ENCODE measurements at regions of chr5 and their contacts with region 1.

Region 1: GRCh38 chr5:67003935-67004729 is 192.5 kb downstream of the CD180 start:
- DNase-seq: peak; percentile 81
- H3K4me3 Mint-ChIP-seq: peak overlapping the region; percentile 90
- H3K27ac Mint-ChIP-seq: peak overlapping the region; percentile 92
- H3K4me1 Mint-ChIP-seq: peaks cover 64% of the 10 kb centered on the region
- H3K27me3 Mint-ChIP-seq: no peaks in the 10 kb centered on the region

Region 2: DNA sequence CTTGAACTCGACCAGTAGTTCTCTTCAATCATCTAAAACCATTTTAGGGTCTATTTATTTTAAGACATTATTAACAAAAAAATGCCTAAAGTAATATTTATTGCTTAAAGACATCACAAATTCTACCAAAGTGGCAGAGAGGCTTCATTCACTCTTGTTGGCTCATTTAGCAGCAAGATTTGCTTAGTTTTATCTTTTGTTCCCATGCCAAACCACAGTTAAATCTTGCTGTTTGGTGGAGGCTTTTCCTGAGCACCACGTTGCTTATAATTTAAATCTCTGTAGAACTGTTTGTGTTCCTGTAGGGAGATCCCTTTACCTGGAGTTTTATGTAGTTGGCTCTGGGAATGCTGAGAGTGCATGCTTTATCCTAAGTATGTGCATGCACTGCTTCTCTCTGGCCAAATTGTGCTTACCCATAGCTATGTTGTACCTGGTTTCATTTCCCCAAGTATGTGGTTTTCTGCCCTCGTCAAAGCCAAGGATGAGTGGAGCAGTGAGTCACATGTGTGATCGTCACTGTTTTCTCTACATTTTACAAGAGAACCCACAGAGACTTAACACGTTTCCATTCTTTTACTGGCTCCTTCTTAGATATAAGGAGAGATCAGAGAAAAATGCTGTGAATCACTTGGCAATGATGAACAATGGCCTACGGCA is 450.1 kb before region 1 on chr5:
- intact Hi-C with region 1: loop called (anchors 10 kb)
- DNase-seq: peak; percentile 50
- H3K4me3 Mint-ChIP-seq: no peak overlapping the region
- H3K27ac Mint-ChIP-seq: peak overlapping the region; percentile 26
- H3K4me1 Mint-ChIP-seq: peaks cover 32% of the 10 kb centered on the region
- H3K27me3 Mint-ChIP-seq: no peaks in the 10 kb centered on the region

Region 3: GRCh38 chr5:66840511-66841013 is 163.6 kb before region 1 on chr5:
- intact Hi-C with region 1: loop called (anchors 1 kb)
- DNase-seq: peak; percentile 53
- H3K4me3 Mint-ChIP-seq: peak overlapping the region; percentile 38
- H3K27ac Mint-ChIP-seq: peak overlapping the region; percentile 81
- H3K4me1 Mint-ChIP-seq: peaks cover 81% of the 10 kb centered on the region
- H3K27me3 Mint-ChIP-seq: no peaks in the 10 kb centered on the region

Region 4: DNA sequence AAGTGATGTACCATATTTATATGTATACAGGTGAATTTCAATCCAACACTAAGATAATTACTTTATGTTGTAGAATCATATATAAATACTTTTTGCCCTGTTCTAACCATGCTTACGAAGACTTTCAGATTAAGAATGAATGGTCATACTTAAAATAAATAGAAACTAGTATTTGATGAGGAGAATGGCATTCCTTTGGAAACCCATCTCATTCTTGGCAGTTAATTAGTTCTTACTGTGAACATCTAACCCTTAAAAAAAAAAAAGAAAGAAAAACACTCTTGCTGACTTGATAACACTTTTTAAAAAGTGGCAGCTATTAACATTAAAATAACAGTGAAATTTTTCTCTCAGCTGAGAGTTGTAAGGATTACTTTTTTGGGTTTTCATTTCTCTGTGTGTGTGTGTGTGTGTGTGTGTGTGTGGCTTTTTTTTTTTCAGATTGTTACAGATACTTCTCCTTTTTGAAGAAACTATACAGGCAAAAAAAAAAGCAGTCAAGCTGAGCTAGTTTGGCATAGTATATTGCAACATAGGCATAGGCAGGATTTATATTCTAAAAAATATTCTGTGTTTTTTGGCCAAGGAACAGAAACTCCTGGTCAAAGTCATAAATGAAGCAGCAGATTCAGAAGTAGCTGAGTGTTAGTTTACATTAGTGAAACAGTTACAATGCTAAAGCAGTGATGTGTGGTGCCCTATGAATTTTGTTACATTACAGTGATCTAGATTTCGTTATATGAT is 29.0 kb after region 1 on chr5:
- intact Hi-C with region 1: loop called (anchors 1 kb)
- DNase-seq: no peak
- H3K4me3 Mint-ChIP-seq: no peak overlapping the region
- H3K27ac Mint-ChIP-seq: peak overlapping the region; percentile 10
- H3K4me1 Mint-ChIP-seq: peaks cover 76% of the 10 kb centered on the region
- H3K27me3 Mint-ChIP-seq: no peaks in the 10 kb centered on the region

Region 5: DNA sequence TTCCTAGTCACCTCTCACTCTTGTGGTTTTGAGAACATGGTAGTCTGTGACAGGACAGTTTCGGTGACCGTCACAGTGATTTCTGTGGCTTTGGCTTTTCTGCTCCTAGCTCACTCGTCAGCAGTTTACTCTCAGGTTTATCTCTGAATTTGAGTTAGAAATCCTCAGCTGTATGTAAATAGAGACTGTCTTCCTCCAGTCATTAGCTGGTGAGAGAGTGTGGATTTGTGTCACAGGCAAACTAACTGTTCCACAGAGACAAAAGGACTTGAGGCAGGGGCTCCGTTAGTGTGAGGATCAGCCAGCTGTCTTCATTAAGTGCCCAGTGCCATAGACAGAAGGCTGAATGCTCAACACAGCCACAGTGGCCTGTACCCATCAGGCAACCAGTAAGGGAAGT is 61.1 kb after region 1 on chr5:
- intact Hi-C with region 1: loop called (anchors 1 kb)
- DNase-seq: no peak
- H3K4me3 Mint-ChIP-seq: no peak overlapping the region
- H3K27ac Mint-ChIP-seq: peak overlapping the region; percentile 3
- H3K4me1 Mint-ChIP-seq: peaks cover 22% of the 10 kb centered on the region
- H3K27me3 Mint-ChIP-seq: no peaks in the 10 kb centered on the region

Region 6: GRCh38 chr5:67165526-67166459 is 161.7 kb after region 1 on chr5:
- intact Hi-C with region 1: loop called (anchors 2 kb)
- DNase-seq: peak; percentile 81
- H3K4me3 Mint-ChIP-seq: peak overlapping the region; percentile 91
- H3K27ac Mint-ChIP-seq: peak overlapping the region; percentile 94
- H3K4me1 Mint-ChIP-seq: peaks cover 79% of the 10 kb centered on the region
- H3K27me3 Mint-ChIP-seq: no peaks in the 10 kb centered on the region

Region 7: DNA sequence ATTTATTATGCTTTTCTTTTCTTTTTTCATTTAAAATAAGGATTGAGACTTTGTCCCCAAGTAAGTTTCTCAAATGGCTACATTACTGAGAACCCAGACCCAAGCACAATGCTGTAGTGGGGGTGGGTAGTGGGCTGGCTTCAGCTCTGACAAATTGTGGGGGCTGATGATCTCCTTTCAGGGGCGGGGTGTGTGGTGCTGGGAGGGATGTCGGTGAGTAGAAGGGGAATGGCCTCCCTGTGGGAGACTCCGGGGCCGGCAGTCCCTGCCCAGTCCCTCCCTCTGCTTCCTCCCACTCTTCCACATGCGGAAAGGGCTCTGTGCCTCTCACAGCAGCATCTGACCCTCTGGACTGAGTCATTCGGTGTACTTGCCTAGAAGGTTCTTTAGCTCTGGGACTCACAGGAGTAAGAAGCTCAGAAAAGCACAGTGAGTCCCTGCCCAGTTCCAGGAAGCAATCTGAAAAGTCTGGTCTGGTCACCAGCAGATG is 178.2 kb after region 1 on chr5:
- intact Hi-C with region 1: no loop called
- DNase-seq: no peak
- H3K4me3 Mint-ChIP-seq: peak overlapping the region; percentile 42
- H3K27ac Mint-ChIP-seq: peak overlapping the region; percentile 86
- H3K4me1 Mint-ChIP-seq: peaks cover 75% of the 10 kb centered on the region
- H3K27me3 Mint-ChIP-seq: no peaks in the 10 kb centered on the region

Region 8: DNA sequence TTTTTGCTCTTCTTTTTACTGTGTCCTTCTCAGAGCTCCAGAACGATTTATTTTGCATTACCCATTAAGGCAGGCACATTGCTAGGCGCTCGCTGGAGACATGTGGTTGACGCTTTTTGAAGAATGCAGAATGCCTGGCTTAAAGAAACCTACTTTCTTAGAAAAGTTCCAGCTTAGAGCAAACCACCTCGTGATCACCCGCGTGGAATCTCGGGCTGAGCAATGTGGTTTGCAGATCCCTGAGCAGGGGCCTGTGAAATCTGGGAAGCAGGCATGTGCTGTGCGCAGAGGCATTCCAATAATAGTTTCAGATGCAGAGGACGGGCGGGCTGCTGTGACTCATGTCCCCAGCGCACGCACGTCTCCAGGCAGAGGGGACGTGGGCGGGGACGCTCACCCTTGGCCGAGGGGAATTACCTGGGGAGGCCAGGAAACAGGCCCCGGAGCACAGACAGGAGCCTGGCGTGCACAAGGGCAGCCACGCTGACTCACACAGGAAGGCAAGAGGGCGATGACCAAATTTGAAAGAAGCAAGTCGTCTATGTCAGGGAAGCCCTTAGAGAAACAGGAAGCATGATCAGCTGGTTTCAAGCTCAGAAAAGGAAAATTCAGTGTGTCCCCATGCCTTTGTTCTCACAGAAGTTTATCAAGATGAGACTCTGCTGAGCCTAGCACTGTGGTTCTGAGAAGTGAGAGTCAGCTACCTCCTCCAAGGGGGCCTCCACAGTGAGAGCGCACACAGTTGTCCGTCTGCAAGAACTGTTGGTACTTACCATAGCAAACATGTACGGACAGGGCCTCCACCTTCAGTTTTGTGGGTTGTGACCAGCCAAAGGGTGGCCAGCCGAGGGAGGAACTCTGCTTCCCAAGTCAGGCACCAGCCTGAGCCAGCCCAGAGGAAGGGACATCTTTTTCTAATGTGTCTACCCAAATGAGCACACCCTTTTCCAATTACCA is 1430.1 kb after region 1 on chr5:
- intact Hi-C with region 1: loop called (anchors 10 kb)
- DNase-seq: peak; percentile 88
- H3K4me3 Mint-ChIP-seq: peak overlapping the region; percentile 16
- H3K27ac Mint-ChIP-seq: peak overlapping the region; percentile 88
- H3K4me1 Mint-ChIP-seq: peaks cover 53% of the 10 kb centered on the region
- H3K27me3 Mint-ChIP-seq: peaks cover 30% of the 10 kb centered on the region